ENCODE measurements at regions of chr16 and their contacts with region 1.

Region 1: GRCh38 chr16:1366712-1367492 is 15.2 kb downstream of the GNPTG start:
- DNase-seq: no peak
- H3K4me3 ChIP-seq: no peak overlapping the region
- H3K27ac ChIP-seq: no peak overlapping the region
- H3K4me1 ChIP-seq: no peaks in the 10 kb centered on the region
- H3K27me3 ChIP-seq: no peaks in the 10 kb centered on the region
- CTCF ChIP-seq: no peak

Region 2: GRCh38 chr16:1645914-1646525 is 279.1 kb after region 1 on chr16:
- CTCF ChIA-PET with region 1: no interaction called
- POLR2A ChIA-PET with region 1: no interaction called
- intact Hi-C with region 1: no loop called
- DNase-seq: peak; percentile 40 to 46
- H3K4me3 ChIP-seq: no peak overlapping the region
- H3K27ac ChIP-seq: peak overlapping the region; percentile 30
- H3K4me1 ChIP-seq: peaks cover 16% of the 10 kb centered on the region
- H3K27me3 ChIP-seq: no peaks in the 10 kb centered on the region
- CTCF ChIP-seq: no peak

Region 3: GRCh38 chr16:1667251-1667650 is 300.3 kb after region 1 on chr16:
- CTCF ChIA-PET with region 1: interaction called, 12 read pairs
- POLR2A ChIA-PET with region 1: no interaction called
- intact Hi-C with region 1: no loop called
- DNase-seq: no peak
- H3K4me3 ChIP-seq: no peak overlapping the region
- H3K27ac ChIP-seq: no peak overlapping the region
- H3K4me1 ChIP-seq: no peaks in the 10 kb centered on the region
- H3K27me3 ChIP-seq: no peaks in the 10 kb centered on the region
- CTCF ChIP-seq: no peak

Region 4: GRCh38 chr16:1772736-1773584 is 406.1 kb after region 1 on chr16 and contains the starts of genes EME2 and MRPS34:
- CTCF ChIA-PET with region 1: no interaction called
- POLR2A ChIA-PET with region 1: no interaction called
- intact Hi-C with region 1: no loop called
- DNase-seq: peak; percentile 69 to 93
- H3K4me3 ChIP-seq: peak within 1 kb of the TSS; percentile 77
- H3K27ac ChIP-seq: peak within 1 kb of the TSS; percentile 77
- H3K4me1 ChIP-seq: peaks cover 19% of the 10 kb centered on the region
- H3K27me3 ChIP-seq: no peaks in the 10 kb centered on the region
- CTCF ChIP-seq: peak; percentile 90
- total RNA-seq, gene EME2: 24.2 and 32.4 TPM in 2 replicates
- total RNA-seq, gene MRPS34: 201 and 247 TPM in 2 replicates

Measured in PC-9 (cell line).